Heart right ventricle (tissue), 16 donors: ENCODE measurements at regions of chr7 and their contacts with region 1.

Region 1: DNA sequence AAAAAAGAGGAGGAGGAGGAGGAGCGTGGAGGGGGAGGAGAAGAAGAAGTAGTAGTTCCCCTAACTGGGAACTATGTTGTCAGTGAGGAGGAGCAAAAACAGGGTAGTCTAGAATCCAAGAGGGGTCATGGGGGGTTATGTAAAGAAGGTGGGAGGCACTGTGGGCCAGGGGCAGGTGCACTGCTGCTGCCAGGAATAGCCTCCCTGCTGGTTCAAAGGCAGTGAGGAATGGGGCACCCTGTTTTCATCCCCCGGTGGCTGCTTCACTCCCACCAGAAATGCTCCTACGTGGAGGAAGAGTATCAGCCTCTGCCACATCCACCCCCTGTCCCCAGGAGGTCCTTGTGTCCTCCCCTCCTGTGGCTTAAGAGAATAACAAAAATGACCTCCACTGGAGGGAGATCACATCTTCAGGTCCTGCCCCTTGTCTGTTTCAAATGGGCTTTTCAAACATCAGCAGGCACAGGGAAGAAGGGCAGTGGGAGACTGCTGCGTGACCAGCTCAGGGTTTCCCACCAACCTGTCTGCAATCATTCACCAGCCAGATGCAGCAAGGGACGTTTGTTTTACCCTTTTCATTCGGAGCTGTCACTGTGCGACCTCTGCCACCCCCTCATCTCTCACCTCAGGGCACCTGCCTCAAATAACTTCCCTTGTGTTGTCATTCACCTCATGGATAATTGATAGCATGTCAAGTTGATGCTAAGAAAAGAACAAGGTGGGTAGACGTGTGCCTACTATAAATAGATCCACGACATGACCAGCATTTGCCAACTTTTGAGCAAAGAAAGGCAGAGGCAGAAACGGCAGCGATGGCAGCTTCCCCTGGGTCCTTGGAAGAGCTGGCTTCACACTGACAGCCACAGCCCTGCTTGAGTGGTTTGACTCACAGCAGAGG is 92.6 kb downstream of the DGKI start:
- DNase-seq: no peak
- ATAC-seq: peak in 4 of 8 donors; percentile 54 to 75 (median 64)
- H3K4me3 ChIP-seq: peak overlapping the region in 1 of 10 donors; percentile 7
- H3K27ac ChIP-seq: no peak overlapping the region
- H3K4me1 ChIP-seq: peaks cover 0 to 27% (median 0%) of the 10 kb centered on the region in 9 donors
- H3K27me3 ChIP-seq: no peaks in the 10 kb centered on the region
- CTCF ChIP-seq: no peak

Region 2: DNA sequence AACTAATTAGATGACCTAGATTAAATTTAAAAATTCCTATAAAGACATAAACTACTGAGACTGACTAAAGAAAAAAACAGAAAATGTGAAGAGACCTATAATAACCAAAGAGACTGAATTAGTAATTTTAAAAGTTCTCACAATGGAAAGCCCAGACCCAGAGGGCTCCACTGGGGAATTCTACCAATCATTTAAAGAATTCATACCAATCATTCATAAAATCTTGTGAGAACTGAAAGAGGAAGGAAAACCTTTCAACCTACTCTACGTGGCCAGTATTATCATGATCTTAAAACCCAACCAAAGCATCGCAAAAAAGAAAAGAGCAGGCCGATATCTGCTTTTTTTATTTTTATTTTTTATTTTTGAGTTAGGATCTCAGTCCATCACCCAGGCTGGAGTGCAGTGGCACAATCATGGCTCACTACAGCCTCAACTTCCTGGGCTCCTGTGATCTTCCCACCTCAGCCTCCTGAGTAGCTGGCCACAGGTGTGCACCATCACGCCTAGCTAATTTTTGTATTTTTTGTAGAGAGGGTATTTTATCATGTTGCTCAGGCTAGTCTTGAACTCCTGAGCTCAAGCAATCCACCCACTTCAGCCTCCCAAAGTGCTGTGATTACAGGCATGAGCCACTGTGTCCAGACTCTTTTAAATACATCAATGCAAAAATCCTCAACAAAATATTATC is 44.0 kb after region 1 on chr7:
- intact Hi-C with region 1: no loop called
- DNase-seq: no peak
- ATAC-seq: no peak
- H3K4me3 ChIP-seq: no peak overlapping the region
- H3K27ac ChIP-seq: no peak overlapping the region
- H3K4me1 ChIP-seq: no peaks in the 10 kb centered on the region
- H3K27me3 ChIP-seq: no peaks in the 10 kb centered on the region
- CTCF ChIP-seq: no peak

Region 3: GRCh38 chr7:137810248-137810647 is 56.0 kb after region 1 on chr7:
- intact Hi-C with region 1: loop called in 1 of 10 experiments (anchors 5 kb)
- DNase-seq: no peak
- ATAC-seq: no peak
- H3K4me3 ChIP-seq: no peak overlapping the region
- H3K27ac ChIP-seq: no peak overlapping the region
- H3K4me1 ChIP-seq: no peaks in the 10 kb centered on the region
- H3K27me3 ChIP-seq: no peaks in the 10 kb centered on the region
- CTCF ChIP-seq: no peak